CD8-positive, alpha-beta T cell (primary cell): ENCODE measurements at regions of chr15 and their contacts with region 1.

Region 1: GRCh38 chr15:44501768-44502366 is 35.1 kb upstream of the EIF3J start:
- DNase-seq: peak in 2 of 9 experiments; percentile 42 to 62
- ATAC-seq: peak; percentile 73
- H3K4me3 ChIP-seq: no peak overlapping the region
- H3K4me3 Mint-ChIP-seq: no peak overlapping the region
- H3K27ac ChIP-seq: no peak overlapping the region
- H3K27ac Mint-ChIP-seq: no peak overlapping the region
- H3K4me1 ChIP-seq: no peaks in the 10 kb centered on the region
- H3K4me1 Mint-ChIP-seq: peaks cover 17% of the 10 kb centered on the region
- H3K27me3 ChIP-seq: no peaks in the 10 kb centered on the region
- H3K27me3 Mint-ChIP-seq: no peaks in the 10 kb centered on the region
- CTCF ChIP-seq: peak; percentile 72

Region 2: DNA sequence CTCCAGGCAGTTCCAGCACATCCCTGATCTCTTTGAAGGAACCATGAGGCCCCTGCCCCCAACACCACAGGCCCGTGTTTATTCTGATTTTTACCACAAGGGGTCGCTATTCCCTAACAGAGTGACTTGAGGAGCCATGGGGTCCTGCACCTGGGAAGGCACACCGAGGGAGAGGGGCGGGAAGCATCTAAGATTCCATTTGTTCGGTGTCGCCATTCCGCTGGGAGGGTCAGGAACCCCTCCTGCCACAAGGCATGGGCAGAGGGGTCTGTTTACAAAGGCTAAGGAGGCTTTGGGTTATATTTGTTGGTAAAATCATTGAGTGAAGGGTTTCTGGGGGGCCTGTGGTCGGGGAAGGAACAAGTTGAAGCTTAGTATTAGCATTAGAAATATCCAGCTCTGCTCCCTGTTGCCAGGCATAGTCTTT is 598.0 kb before region 1 on chr15:
- CTCF ChIA-PET with region 1: interaction called, 3 read pairs
- POLR2A ChIA-PET with region 1: no interaction called
- intact Hi-C with region 1: loop called in 1 of 2 experiments (anchors 5 kb)
- DNase-seq: peak; percentile 6 to 67 (median 45)
- ATAC-seq: peak; percentile 61
- H3K4me3 ChIP-seq: no peak overlapping the region
- H3K4me3 Mint-ChIP-seq: no peak overlapping the region
- H3K27ac ChIP-seq: no peak overlapping the region
- H3K27ac Mint-ChIP-seq: no peak overlapping the region
- H3K4me1 ChIP-seq: peaks cover 4% of the 10 kb centered on the region
- H3K4me1 Mint-ChIP-seq: peaks cover 3% of the 10 kb centered on the region
- H3K27me3 ChIP-seq: no peaks in the 10 kb centered on the region
- H3K27me3 Mint-ChIP-seq: peaks cover 2% of the 10 kb centered on the region
- CTCF ChIP-seq: peak; percentile 62

Region 3: GRCh38 chr15:44102675-44103254 is 399.1 kb before region 1 on chr15:
- CTCF ChIA-PET with region 1: no interaction called
- POLR2A ChIA-PET with region 1: no interaction called
- intact Hi-C with region 1: loop called in 1 of 2 experiments (anchors 10 kb)
- DNase-seq: no peak
- ATAC-seq: no peak
- H3K4me3 ChIP-seq: no peak overlapping the region
- H3K4me3 Mint-ChIP-seq: no peak overlapping the region
- H3K27ac ChIP-seq: no peak overlapping the region
- H3K27ac Mint-ChIP-seq: no peak overlapping the region
- H3K4me1 ChIP-seq: no peaks in the 10 kb centered on the region
- H3K4me1 Mint-ChIP-seq: no peaks in the 10 kb centered on the region
- H3K27me3 ChIP-seq: no peaks in the 10 kb centered on the region
- H3K27me3 Mint-ChIP-seq: peaks cover 19% of the 10 kb centered on the region
- CTCF ChIP-seq: no peak

Region 4: GRCh38 chr15:44215594-44215993 is 286.3 kb before region 1 on chr15:
- CTCF ChIA-PET with region 1: interaction called, 5 read pairs
- POLR2A ChIA-PET with region 1: no interaction called
- intact Hi-C with region 1: loop called in 1 of 2 experiments (anchors 1 kb)
- DNase-seq: no peak
- ATAC-seq: no peak
- H3K4me3 ChIP-seq: no peak overlapping the region
- H3K4me3 Mint-ChIP-seq: no peak overlapping the region
- H3K27ac ChIP-seq: no peak overlapping the region
- H3K27ac Mint-ChIP-seq: no peak overlapping the region
- H3K4me1 ChIP-seq: no peaks in the 10 kb centered on the region
- H3K4me1 Mint-ChIP-seq: peaks cover 2% of the 10 kb centered on the region
- H3K27me3 ChIP-seq: no peaks in the 10 kb centered on the region
- H3K27me3 Mint-ChIP-seq: peaks cover 30% of the 10 kb centered on the region
- CTCF ChIP-seq: no peak

Region 5: DNA sequence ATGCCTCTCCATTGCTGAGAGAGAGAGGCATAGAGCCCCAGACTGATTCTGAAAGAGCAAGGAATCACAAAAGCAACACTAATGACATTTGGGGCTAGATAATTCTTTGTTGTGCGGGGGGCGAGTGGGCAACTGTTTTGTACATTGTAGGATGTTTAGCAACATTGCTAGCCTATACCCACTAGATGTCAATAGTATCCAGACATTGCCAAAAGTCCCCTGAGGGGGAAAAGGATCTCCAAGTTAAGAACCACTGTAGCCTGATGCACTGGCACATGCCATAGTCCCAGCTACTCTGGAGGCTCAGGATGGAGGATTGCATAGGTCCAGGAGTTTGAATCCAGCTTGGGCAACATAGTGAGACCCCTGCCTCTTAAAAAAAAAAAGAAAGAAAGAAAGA is 236.1 kb before region 1 on chr15:
- CTCF ChIA-PET with region 1: no interaction called
- POLR2A ChIA-PET with region 1: no interaction called
- intact Hi-C with region 1: loop called in 1 of 2 experiments (anchors 5 kb)
- DNase-seq: peak in 2 of 9 experiments; percentile 11 to 22
- ATAC-seq: no peak
- H3K4me3 ChIP-seq: no peak overlapping the region
- H3K4me3 Mint-ChIP-seq: no peak overlapping the region
- H3K27ac ChIP-seq: no peak overlapping the region
- H3K27ac Mint-ChIP-seq: no peak overlapping the region
- H3K4me1 ChIP-seq: no peaks in the 10 kb centered on the region
- H3K4me1 Mint-ChIP-seq: no peaks in the 10 kb centered on the region
- H3K27me3 ChIP-seq: no peaks in the 10 kb centered on the region
- H3K27me3 Mint-ChIP-seq: no peaks in the 10 kb centered on the region
- CTCF ChIP-seq: no peak

Region 6: DNA sequence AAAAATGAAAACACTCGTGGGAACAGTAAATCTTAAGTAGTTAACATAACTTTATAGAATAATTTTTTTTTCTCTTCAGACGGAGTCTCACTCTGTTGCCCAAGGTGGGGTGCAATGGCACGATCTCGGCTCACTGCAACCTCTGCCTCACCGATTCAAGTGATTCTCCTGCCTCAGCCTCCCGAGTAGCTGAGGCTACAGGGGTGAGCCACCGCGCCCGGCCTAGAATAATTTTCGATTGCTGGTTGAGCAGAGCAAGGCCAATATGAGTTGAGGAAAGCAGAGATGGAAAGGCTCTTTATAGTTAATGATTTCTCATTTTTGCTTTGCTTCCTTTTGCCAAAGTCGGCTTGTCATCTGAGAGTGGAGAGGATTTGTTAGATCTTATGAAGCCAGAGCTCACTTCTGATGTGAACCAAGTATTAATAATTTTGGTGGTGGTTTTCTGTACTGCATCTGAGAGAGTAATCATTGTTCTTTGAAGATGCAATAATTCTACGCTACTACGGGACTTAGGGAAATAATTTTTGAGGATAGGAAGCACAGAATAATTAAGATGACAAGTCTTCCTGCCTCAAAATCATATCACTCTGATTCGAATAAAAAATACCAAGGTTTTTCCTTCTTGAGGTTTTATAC is 214.9 kb before region 1 on chr15:
- CTCF ChIA-PET with region 1: interaction called, 3 read pairs
- POLR2A ChIA-PET with region 1: no interaction called
- intact Hi-C with region 1: loop called in 1 of 2 experiments (anchors 1 kb)
- DNase-seq: peak in 2 of 9 experiments; percentile 7 to 36
- ATAC-seq: no peak
- H3K4me3 ChIP-seq: peak overlapping the region; percentile 77 to 91
- H3K4me3 Mint-ChIP-seq: peak overlapping the region; percentile 94
- H3K27ac ChIP-seq: peak overlapping the region; percentile 95 to 97
- H3K27ac Mint-ChIP-seq: peak overlapping the region; percentile 98
- H3K4me1 ChIP-seq: peaks cover 26% of the 10 kb centered on the region
- H3K4me1 Mint-ChIP-seq: peaks cover 42% of the 10 kb centered on the region
- H3K27me3 ChIP-seq: no peaks in the 10 kb centered on the region
- H3K27me3 Mint-ChIP-seq: peaks cover 2% of the 10 kb centered on the region
- CTCF ChIP-seq: peak; percentile 36

Region 7: DNA sequence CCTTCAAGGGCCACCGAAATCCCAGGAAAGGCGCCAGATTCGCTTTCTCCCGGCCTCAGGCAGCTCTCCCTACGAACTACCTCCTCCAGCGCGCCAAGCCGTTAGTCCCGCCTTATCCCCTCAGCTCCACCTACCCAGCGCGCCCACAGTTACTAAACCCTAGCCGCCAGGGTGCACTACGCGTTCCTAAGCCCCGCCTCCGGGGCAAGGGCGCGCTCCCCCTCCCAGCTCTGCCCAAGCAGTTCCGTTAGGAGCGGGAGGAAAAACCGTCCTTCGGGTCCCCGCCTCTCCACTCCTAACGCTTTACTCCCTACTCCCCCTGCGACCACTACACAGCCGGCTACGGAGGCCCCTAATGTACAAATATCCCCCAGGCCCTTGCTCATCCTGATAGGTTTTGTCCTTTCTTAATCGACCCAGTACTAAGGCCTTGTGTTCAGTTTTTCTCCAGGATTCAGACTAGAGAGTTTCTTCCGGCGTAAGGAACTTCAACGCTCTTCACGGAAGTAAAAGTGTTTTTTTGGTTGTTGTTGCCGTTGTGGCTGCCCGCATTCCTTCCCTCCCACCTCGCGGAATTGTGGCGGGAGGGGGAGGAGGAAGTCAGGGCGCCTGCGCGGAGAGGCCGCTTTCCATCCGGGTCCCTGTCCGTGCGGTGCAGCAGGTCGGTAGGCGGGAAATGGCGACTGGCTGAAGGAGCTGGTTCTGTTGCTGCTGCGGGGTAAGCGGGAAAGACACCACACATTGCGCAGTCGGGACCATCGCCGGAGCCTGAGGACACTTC is 74.7 kb before region 1 on chr15 and contains the start of gene CTDSPL2:
- CTCF ChIA-PET with region 1: interaction called, 9 read pairs
- POLR2A ChIA-PET with region 1: no interaction called
- intact Hi-C with region 1: loop called in 1 of 2 experiments (anchors 5 kb)
- DNase-seq: peak; percentile 88 to 97 (median 93)
- ATAC-seq: peak; percentile 95
- H3K4me3 ChIP-seq: peak within 1 kb of the TSS; percentile 61 to 83
- H3K4me3 Mint-ChIP-seq: peak within 1 kb of the TSS; percentile 98
- H3K27ac ChIP-seq: peak within 1 kb of the TSS; percentile 86
- H3K27ac Mint-ChIP-seq: peak within 1 kb of the TSS; percentile 98
- H3K4me1 ChIP-seq: peaks cover 25% of the 10 kb centered on the region
- H3K4me1 Mint-ChIP-seq: peaks cover 46% of the 10 kb centered on the region
- H3K27me3 ChIP-seq: no peaks in the 10 kb centered on the region
- H3K27me3 Mint-ChIP-seq: no peaks in the 10 kb centered on the region
- CTCF ChIP-seq: no peak
- total RNA-seq, gene CTDSPL2: 103 to 104 TPM